ENCODE measurements at regions of chr10 and their contacts with region 1.

Region 1: DNA sequence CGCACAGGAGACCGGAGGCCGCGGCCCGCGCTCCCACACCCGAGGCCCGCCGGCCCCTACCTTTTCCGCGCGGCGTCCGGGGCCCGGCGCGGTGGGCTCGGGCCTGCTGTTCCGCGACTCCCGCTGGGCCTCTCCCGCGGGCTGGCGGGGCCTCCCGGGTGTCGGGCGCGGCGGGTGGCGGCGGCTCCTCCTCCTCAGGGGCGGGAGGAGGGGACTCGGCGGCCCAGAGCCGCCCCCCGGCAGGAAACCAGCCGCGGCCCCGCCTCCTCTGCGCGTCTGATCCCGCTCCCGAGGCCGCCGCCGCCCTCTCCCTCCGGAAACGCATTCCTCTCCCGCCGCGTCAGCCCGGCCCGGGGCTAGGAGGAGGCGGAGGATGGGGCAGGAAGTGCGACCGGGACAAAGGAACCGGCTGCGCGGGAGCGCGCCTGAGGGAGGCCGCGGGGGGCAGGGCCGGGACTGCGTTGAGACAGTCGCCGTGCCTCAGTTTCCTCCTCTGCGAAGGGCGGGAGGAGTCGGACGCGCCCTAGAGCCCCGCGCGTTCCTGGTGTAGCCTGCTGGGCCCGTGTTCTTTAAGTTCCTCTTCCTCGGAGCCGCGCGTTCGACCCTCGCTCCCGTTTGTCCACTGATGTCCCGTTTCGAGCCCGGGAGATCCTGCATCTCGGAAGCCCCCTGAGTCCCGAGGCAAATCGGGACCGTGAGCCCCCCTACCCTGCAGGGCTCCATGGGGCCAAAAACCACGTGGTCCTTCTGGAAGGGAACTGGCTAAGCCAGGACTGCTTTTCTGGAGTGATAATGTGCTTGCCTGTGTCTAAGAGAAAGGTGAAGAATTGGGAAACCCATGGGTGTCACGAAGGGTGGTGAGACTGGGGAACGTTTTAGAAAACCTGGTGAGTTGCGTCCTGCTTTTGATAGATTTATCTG is at the start of gene ITGB1:
- DNase-seq: peak; percentile 85
- ATAC-seq: peak; percentile 83
- H3K4me3 Mint-ChIP-seq: peak within 1 kb of the TSS; percentile 86
- H3K27ac Mint-ChIP-seq: peak within 1 kb of the TSS; percentile 95
- H3K4me1 Mint-ChIP-seq: peaks cover 72% of the 10 kb centered on the region
- H3K27me3 Mint-ChIP-seq: no peaks in the 10 kb centered on the region
- CTCF ChIP-seq: no peak
- total RNA-seq, gene ITGB1: 80.3 and 87.4 TPM in 2 replicates

Region 2: DNA sequence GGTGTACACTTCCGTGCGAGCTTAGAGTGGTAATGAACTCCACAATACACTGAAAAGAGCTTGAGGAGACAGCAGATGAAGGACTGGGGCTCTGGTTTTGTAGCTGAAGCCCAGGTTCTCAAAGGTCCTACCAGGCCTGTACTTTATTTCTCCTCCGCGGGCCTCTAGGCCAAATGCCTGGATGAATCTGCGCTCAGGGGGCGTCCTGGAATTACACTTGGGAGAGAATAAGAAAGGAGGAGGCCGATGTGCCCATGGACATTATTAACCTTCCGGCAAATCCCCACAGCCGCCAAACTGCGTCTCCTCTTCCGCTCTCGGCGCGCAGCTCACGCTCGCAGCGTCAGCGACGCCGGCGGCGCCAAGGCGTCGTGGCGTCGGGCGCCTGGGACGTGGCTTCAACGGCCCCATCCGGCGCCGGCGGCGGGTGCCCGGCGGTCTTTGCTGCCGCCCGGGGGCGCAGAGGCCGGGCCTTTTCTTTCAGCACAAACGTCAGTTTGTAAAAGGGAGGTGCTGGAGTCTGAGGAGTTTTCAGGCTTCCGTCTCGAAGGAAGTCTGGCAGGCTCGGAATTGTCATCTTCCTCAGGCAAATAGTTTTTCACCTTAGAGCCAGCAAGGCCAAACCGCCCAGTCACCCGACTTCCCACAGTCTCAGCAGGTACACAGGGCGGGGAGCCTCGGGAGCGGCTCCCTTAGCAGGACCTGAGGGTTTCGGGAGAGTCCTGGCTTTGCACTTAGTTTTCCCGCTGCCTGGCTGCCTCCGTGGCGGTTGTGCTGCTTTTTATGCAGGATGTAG is 512.4 kb before region 1 on chr10 and contains the start of gene CCDC7:
- CTCF ChIA-PET with region 1: no interaction called
- POLR2A ChIA-PET with region 1: no interaction called
- intact Hi-C with region 1: loop called (anchors 1 kb)
- DNase-seq: peak; percentile 83
- ATAC-seq: peak; percentile 98
- H3K4me3 Mint-ChIP-seq: peak within 1 kb of the TSS; percentile 98
- H3K27ac Mint-ChIP-seq: peak within 1 kb of the TSS; percentile 99
- H3K4me1 Mint-ChIP-seq: peaks cover 15% of the 10 kb centered on the region
- H3K27me3 Mint-ChIP-seq: peaks cover 6% of the 10 kb centered on the region
- CTCF ChIP-seq: no peak
- total RNA-seq, gene CCDC7: 16.8 and 20.0 TPM in 2 replicates

Region 3: DNA sequence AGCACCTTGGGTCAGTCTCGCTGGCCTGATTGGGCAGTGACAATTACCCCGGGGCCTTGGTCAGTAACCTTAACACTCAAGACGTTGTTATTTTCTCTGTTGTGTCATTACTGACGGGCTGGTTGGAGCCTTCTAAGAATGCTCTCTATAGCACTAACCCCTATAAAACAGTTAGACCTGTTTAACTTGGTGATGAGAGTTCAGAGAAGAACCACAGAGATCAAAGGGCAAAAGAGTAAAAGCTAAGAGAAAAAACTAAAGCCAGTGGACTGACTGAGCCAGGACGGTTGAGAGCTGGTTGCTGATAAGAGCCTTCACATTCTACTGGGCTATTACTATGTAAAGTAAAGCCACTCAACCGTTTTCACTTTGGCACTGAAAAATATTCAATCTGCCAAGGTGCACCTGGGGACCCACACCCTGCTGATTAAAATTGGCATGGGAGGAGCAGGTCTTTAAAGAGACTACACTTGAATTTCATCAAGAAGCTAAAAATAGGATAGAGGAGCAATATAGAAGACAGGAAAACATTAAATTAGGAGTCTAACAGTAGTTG is 13.3 kb after region 1 on chr10:
- CTCF ChIA-PET with region 1: interaction called, 3 read pairs
- POLR2A ChIA-PET with region 1: interaction called, 16 read pairs
- intact Hi-C with region 1: loop called (anchors 1 kb)
- DNase-seq: no peak
- ATAC-seq: peak; percentile 65
- H3K4me3 Mint-ChIP-seq: peak overlapping the region; percentile 72
- H3K27ac Mint-ChIP-seq: peak overlapping the region; percentile 87
- H3K4me1 Mint-ChIP-seq: peaks cover 36% of the 10 kb centered on the region
- H3K27me3 Mint-ChIP-seq: no peaks in the 10 kb centered on the region
- CTCF ChIP-seq: no peak

Region 4: DNA sequence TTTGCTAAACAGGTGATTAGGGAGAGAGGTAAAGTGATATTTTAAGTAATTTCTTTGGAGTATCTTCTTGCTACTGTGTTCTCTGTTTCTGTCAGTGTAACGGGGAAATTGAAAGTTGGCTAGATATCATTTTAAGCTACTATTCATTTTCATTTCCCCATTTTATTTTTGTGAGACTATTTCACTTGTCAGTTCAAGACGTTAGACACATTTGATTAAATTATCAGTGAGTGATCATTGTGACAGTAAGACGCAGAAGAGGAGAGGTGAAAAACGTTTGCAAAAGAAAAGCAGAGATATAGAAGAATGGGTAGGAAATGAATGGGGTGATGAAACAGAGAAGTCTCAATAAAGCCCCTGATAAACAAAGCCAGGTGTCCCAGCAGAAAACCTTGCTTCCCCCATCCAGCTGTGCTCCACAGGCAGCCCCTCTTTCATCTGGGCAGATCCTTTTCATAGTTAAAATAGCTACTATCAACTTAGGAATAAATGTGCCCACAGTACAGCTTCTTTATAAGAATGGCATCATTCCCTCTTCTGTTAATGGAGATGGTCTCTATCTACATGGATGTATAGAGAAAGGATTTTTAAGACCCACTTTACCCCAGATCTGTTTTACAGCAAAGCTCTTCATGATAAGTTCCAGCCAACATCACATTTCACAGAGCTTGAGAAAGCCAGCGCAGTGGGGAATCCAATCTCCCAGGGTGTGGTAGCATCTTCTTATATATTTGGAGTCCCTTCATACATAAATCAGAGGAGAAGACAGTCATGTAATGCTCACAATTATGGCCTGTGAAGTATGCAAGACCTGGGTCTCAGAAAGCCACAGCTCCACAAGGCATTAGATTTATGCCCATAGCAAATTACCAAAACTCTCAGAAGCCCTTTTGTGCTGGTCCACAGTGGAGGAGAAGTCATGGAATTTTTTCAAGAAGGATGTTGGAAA is 137.8 kb after region 1 on chr10:
- CTCF ChIA-PET with region 1: no interaction called
- POLR2A ChIA-PET with region 1: no interaction called
- intact Hi-C with region 1: loop called (anchors 5 kb)
- DNase-seq: no peak
- ATAC-seq: peak; percentile 66
- H3K4me3 Mint-ChIP-seq: peak overlapping the region; percentile 36
- H3K27ac Mint-ChIP-seq: peak overlapping the region; percentile 72
- H3K4me1 Mint-ChIP-seq: peaks cover 74% of the 10 kb centered on the region
- H3K27me3 Mint-ChIP-seq: no peaks in the 10 kb centered on the region
- CTCF ChIP-seq: no peak

Region 5: GRCh38 chr10:33134011-33134751 is 175.8 kb after region 1 on chr10:
- CTCF ChIA-PET with region 1: no interaction called
- POLR2A ChIA-PET with region 1: no interaction called
- intact Hi-C with region 1: loop called (anchors 1 kb)
- DNase-seq: peak; percentile 21
- ATAC-seq: peak; percentile 84
- H3K4me3 Mint-ChIP-seq: no peak overlapping the region
- H3K27ac Mint-ChIP-seq: peak overlapping the region; percentile 57
- H3K4me1 Mint-ChIP-seq: peaks cover 40% of the 10 kb centered on the region
- H3K27me3 Mint-ChIP-seq: no peaks in the 10 kb centered on the region
- CTCF ChIP-seq: no peak

Measured in activated B cell treated with CpG ODN at 0.5 μM for 24 hours (primary cell).